WTC11 (cell line): ENCODE measurements at regions of chr1 and their contacts with region 1.

Region 1: DNA sequence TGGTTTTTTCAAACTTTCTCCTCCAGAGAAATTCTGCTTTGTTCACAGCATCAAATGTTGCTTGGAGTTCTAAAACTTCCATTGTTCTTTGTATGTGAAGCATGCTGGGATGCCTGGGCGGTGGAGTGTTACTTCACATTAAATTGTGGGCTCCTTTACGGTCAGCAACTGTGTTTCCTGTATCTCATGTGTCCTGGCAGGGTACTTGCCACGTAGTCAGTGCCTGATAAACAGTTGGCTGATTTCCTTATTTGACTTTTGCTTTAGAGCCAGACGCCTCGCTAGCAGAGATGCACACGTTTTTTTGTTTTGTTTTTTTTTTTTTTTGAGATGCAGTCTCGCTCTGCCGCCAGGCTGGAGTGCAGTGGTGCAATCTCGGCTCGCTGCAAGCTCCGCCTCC is 96.7 kb downstream of the UCK2 start:
- DNase-seq: no peak
- ATAC-seq: no peak
- H3K4me3 Mint-ChIP-seq: no peak overlapping the region
- H3K27ac Mint-ChIP-seq: no peak overlapping the region
- H3K4me1 Mint-ChIP-seq: no peaks in the 10 kb centered on the region
- H3K27me3 Mint-ChIP-seq: no peaks in the 10 kb centered on the region
- CTCF ChIP-seq: no peak

Region 2: DNA sequence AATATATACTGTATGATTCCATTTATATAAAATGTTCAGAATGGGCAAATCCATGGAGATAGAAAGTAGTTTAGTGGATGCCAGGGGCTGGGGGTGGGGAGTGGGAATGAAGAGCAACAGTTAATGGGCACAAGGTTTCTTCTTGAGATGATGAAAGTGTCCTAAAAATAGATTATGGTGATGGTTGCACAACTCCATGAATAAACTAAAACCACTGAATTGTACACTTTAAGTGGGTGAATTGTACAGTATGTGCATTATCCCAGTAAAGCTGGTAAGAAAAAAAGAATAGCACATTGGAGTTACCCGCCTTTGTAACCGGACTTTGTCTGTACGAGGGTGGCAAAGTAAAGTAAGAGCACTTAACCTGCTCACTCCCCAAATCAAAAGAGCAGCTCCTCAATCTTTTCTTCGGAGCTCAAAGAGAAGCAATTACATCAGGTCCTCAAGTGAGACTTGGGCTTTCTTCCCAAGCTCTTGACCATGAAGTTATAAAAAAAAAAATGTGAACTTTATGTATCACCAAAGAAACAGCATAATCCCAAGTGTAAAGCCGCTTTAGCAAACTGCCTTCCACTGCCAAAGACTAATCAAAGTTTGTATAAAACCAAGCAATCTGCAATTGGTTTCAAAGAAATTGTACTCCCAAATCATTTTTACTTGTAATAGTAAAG is 257.8 kb before region 1 on chr1:
- CTCF ChIA-PET with region 1: no interaction called
- POLR2A ChIA-PET with region 1: no interaction called
- DNase-seq: no peak
- ATAC-seq: no peak
- H3K4me3 Mint-ChIP-seq: no peak overlapping the region
- H3K27ac Mint-ChIP-seq: no peak overlapping the region
- H3K4me1 Mint-ChIP-seq: peaks cover 5% of the 10 kb centered on the region; the same call in 1 of the 2 replicates
- H3K27me3 Mint-ChIP-seq: no peaks in the 10 kb centered on the region
- CTCF ChIP-seq: no peak

Region 3: GRCh38 chr1:165942927-165943597 is 18.9 kb after region 1 on chr1:
- CTCF ChIA-PET with region 1: interaction called, 15 read pairs
- POLR2A ChIA-PET with region 1: no interaction called
- DNase-seq: no peak
- ATAC-seq: peak; percentile 76
- H3K4me3 Mint-ChIP-seq: no peak overlapping the region
- H3K27ac Mint-ChIP-seq: peak overlapping the region; percentile 8
- H3K4me1 Mint-ChIP-seq: peaks cover 26% of the 10 kb centered on the region
- H3K27me3 Mint-ChIP-seq: no peaks in the 10 kb centered on the region; the same call in none of the 2 replicates
- CTCF ChIP-seq: no peak

Region 4: GRCh38 chr1:165949335-165950130 is 25.4 kb after region 1 on chr1:
- CTCF ChIA-PET with region 1: interaction called, 15 read pairs
- POLR2A ChIA-PET with region 1: no interaction called
- DNase-seq: peak; percentile 71
- ATAC-seq: peak; percentile 93
- H3K4me3 Mint-ChIP-seq: no peak overlapping the region
- H3K27ac Mint-ChIP-seq: no peak overlapping the region
- H3K4me1 Mint-ChIP-seq: peaks cover 11% of the 10 kb centered on the region
- H3K27me3 Mint-ChIP-seq: no peaks in the 10 kb centered on the region
- CTCF ChIP-seq: no peak

Region 5: DNA sequence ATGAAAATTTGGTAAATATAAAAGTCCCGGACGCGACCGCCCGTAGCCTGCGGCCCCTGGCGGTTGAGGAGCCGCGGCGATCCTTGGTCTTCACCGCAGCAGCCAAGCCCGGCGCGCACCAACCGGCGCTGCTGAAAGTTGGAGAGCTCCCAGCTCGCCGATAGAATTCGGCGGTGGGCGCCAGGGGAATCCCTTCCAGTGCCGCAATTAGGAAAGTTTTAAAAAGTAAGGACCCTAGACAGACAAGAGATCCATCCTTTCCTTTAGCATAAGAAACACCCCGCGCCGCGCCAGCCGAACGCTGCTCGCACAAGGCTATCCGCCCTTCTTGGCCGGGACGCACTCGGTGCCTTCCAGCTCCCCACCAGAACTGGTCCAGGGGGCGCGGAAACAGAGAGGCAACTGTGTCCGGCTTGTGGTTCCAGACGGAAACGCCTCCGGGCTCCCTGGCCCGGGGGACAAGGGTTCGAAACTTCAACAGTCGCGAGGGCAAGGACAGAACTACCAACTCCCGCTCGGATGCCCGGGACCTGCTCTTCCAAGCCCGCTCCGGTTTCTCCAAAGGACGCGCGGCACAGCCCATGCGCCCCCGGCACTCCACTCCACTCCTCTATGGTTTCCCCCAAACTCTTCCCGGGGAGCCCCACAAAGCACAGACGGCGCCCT is 241.0 kb after region 1 on chr1:
- CTCF ChIA-PET with region 1: interaction called, 20 read pairs
- POLR2A ChIA-PET with region 1: no interaction called
- DNase-seq: peak; percentile 77
- ATAC-seq: peak; percentile 64
- H3K4me3 Mint-ChIP-seq: peak overlapping the region; percentile 82
- H3K27ac Mint-ChIP-seq: no peak overlapping the region
- H3K4me1 Mint-ChIP-seq: peaks cover 21% of the 10 kb centered on the region
- H3K27me3 Mint-ChIP-seq: peaks cover 55% of the 10 kb centered on the region
- CTCF ChIP-seq: no peak

Region 6: GRCh38 chr1:166479052-166479631 is 555.0 kb after region 1 on chr1:
- CTCF ChIA-PET with region 1: interaction called, 13 read pairs
- POLR2A ChIA-PET with region 1: no interaction called
- DNase-seq: peak; percentile 66
- ATAC-seq: no peak
- H3K4me3 Mint-ChIP-seq: no peak overlapping the region
- H3K27ac Mint-ChIP-seq: no peak overlapping the region
- H3K4me1 Mint-ChIP-seq: peaks cover 12% of the 10 kb centered on the region
- H3K27me3 Mint-ChIP-seq: no peaks in the 10 kb centered on the region; the same call in 1 of the 2 replicates
- CTCF ChIP-seq: peak; percentile 78